ENCODE measurements at regions of chr3 and their contacts with region 1.

Region 1: GRCh38 chr3:149575961-149576564 is 81.8 kb downstream of the WWTR1 start:
- DNase-seq: peak; percentile 86
- ATAC-seq: peak; percentile 62
- H3K4me3 ChIP-seq: peak overlapping the region; percentile 20 to 38
- H3K27ac ChIP-seq: peak overlapping the region; percentile 99
- H3K4me1 ChIP-seq: peaks cover 99 to 100% of the 10 kb centered on the region in 2 experiments
- H3K27me3 ChIP-seq: no peaks in the 10 kb centered on the region
- CTCF ChIP-seq: no peak
- POLR2A ChIP-seq: no peak
- RAD21 ChIP-seq: no peak

Region 2: GRCh38 chr3:149023951-149024350 is 552.1 kb before region 1 on chr3:
- CTCF ChIA-PET with region 1: no interaction called
- POLR2A ChIA-PET with region 1: no interaction called
- RAD21 ChIA-PET with region 1: no interaction called
- intact Hi-C with region 1: no loop called
- DNase-seq: no peak
- ATAC-seq: no peak
- H3K4me3 ChIP-seq: no peak overlapping the region
- H3K27ac ChIP-seq: no peak overlapping the region
- H3K4me1 ChIP-seq: no peaks in the 10 kb centered on the region
- H3K27me3 ChIP-seq: no peaks in the 10 kb centered on the region
- CTCF ChIP-seq: no peak
- POLR2A ChIP-seq: no peak
- RAD21 ChIP-seq: no peak

Region 3: GRCh38 chr3:149586871-149587270 is 10.8 kb after region 1 on chr3:
- CTCF ChIA-PET with region 1: interaction called, 4 read pairs
- POLR2A ChIA-PET with region 1: interaction called, 12 read pairs
- RAD21 ChIA-PET with region 1: no interaction called
- intact Hi-C with region 1: no loop called
- DNase-seq: peak; percentile 82
- ATAC-seq: peak; percentile 67
- H3K4me3 ChIP-seq: peak overlapping the region in 1 of 2 experiments; percentile 43; a peak in 2 of 4 replicates
- H3K27ac ChIP-seq: peak overlapping the region; percentile 73
- H3K4me1 ChIP-seq: peaks cover 78% of the 10 kb centered on the region in 2 experiments
- H3K27me3 ChIP-seq: no peaks in the 10 kb centered on the region
- CTCF ChIP-seq: no peak
- POLR2A ChIP-seq: no peak
- RAD21 ChIP-seq: peak; percentile 29; the same call in 1 of the 2 replicates

Measured in HCT116 (cell line).